ENCODE measurements at regions of chr2 and their contacts with region 1.

Region 1: GRCh38 chr2:67571785-67572718 is 174.9 kb downstream of the ETAA1 start:
- DNase-seq: peak; percentile 14
- H3K4me3 Mint-ChIP-seq: peak overlapping the region; percentile 39
- H3K27ac Mint-ChIP-seq: peak overlapping the region; percentile 99
- H3K4me1 Mint-ChIP-seq: peaks cover 40% of the 10 kb centered on the region
- H3K27me3 Mint-ChIP-seq: no peaks in the 10 kb centered on the region
- CTCF ChIP-seq: no peak

Region 2: GRCh38 chr2:67397143-67397986 is 174.7 kb before region 1 on chr2 and contains the start of gene ETAA1:
- CTCF ChIA-PET with region 1: no interaction called
- intact Hi-C with region 1: loop called (anchors 2 kb)
- DNase-seq: peak; percentile 93
- H3K4me3 Mint-ChIP-seq: peak within 1 kb of the TSS; percentile 88
- H3K27ac Mint-ChIP-seq: peak within 1 kb of the TSS; percentile 90
- H3K4me1 Mint-ChIP-seq: peaks cover 36% of the 10 kb centered on the region
- H3K27me3 Mint-ChIP-seq: no peaks in the 10 kb centered on the region
- CTCF ChIP-seq: no peak
- total RNA-seq, gene ETAA1: 12.2 and 12.6 TPM in 2 replicates

Region 3: DNA sequence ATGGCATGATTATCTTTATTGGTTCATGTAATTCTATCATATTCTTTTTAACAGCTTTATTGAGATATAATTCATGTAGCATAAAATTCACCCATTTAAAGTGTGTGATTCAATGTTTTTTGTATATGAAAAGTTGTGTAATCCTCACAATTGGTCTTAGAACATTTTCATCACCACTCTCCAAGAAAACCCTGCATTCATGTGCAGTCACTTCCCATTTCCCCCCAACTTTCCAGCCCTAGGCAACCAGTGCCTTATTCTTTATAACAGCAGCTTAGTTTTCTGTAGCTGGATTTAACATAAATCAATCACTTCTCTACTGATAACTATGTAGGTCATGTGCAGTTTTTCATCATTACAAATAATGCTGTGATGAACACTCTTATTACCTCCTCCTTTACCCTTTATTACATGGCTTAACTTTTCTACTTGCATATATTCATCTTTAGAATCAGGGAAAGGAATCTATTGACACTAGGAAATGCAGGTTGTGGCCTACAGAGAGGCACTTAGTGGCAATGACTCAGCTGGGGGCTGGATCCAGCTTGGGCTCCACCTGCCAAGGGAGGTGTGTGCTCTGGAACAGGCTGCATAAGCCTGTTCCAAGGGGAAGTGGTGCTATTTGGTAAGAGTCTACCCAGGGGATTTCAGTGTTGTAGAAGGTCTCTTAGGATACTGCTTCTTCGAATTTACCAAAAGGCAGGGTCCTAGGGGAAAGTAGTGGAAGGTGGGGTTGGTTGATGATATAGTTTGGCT is 85.8 kb before region 1 on chr2:
- CTCF ChIA-PET with region 1: interaction called, 3 read pairs
- intact Hi-C with region 1: loop called (anchors 5 kb)
- DNase-seq: peak; percentile 59
- H3K4me3 Mint-ChIP-seq: no peak overlapping the region
- H3K27ac Mint-ChIP-seq: no peak overlapping the region
- H3K4me1 Mint-ChIP-seq: peaks cover 13% of the 10 kb centered on the region
- H3K27me3 Mint-ChIP-seq: no peaks in the 10 kb centered on the region
- CTCF ChIP-seq: no peak

Measured in Calu3 (cell line).